CD4-positive, alpha-beta T cell (primary cell): ENCODE measurements at regions of chr12 and their contacts with region 1.

Region 1: DNA sequence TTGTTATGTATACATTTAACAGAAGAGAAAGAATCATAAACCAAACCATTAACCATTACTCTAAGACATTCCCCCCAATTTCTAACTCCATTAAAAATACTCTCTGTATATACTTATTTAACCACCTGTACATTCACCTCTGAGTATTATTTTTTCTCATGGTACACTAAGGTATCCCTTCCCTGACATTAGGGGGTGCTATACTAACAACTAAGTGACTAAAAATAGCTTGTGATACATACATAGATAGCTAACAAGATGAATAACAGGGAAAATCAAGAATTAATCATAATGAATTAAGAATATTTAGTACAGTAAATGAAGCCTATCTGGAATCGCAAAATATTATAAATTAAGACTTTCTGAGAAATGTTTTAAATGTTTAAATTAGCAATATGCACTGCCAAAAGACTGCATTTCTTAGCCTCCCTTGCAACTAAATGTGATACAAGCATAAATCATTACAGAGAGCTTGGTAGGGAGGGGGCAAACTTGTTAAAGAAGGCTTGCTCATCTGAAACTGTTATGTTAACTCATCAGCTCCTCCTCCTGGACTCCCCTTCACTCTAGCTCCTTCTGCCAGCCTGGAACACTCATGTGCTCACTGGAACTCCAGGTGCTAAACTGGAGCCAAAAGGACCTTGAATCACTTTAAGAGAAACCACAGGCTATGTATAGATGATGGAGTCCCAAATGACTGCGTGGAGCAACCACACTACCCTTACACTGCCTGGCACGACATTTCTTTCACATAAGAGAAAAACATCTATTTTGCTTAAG is 14.9 kb downstream of the C2CD5 start:
- DNase-seq: peak in 3 of 14 experiments; percentile 62 to 63 (median 62)
- ATAC-seq: peak; percentile 94
- H3K4me3 ChIP-seq: no peak overlapping the region
- H3K4me3 Mint-ChIP-seq: no peak overlapping the region
- H3K27ac ChIP-seq: no peak overlapping the region
- H3K27ac Mint-ChIP-seq: no peak overlapping the region
- H3K4me1 ChIP-seq: no peaks in the 10 kb centered on the region
- H3K4me1 Mint-ChIP-seq: peaks cover 16% of the 10 kb centered on the region
- H3K27me3 ChIP-seq: no peaks in the 10 kb centered on the region
- H3K27me3 Mint-ChIP-seq: no peaks in the 10 kb centered on the region
- CTCF ChIP-seq: peak; percentile 83

Region 2: GRCh38 chr12:22544038-22544979 is 14.8 kb after region 1 on chr12 and contains the start of gene C2CD5:
- CTCF ChIA-PET with region 1: interaction called, 12 read pairs
- POLR2A ChIA-PET with region 1: interaction called, 12 read pairs
- intact Hi-C with region 1: no loop called
- DNase-seq: peak; percentile 90 to 98 (median 94)
- ATAC-seq: peak; percentile 89
- H3K4me3 ChIP-seq: peak within 1 kb of the TSS; percentile 82
- H3K4me3 Mint-ChIP-seq: peak within 1 kb of the TSS; percentile 95
- H3K27ac ChIP-seq: peak within 1 kb of the TSS; percentile 81 to 88
- H3K27ac Mint-ChIP-seq: peak within 1 kb of the TSS; percentile 97
- H3K4me1 ChIP-seq: peaks cover 31% of the 10 kb centered on the region
- H3K4me1 Mint-ChIP-seq: peaks cover 44% of the 10 kb centered on the region
- H3K27me3 ChIP-seq: no peaks in the 10 kb centered on the region
- H3K27me3 Mint-ChIP-seq: peaks cover 6% of the 10 kb centered on the region
- CTCF ChIP-seq: peak; percentile 37
- total RNA-seq, gene C2CD5: 21.8 to 23.2 TPM

Region 3: DNA sequence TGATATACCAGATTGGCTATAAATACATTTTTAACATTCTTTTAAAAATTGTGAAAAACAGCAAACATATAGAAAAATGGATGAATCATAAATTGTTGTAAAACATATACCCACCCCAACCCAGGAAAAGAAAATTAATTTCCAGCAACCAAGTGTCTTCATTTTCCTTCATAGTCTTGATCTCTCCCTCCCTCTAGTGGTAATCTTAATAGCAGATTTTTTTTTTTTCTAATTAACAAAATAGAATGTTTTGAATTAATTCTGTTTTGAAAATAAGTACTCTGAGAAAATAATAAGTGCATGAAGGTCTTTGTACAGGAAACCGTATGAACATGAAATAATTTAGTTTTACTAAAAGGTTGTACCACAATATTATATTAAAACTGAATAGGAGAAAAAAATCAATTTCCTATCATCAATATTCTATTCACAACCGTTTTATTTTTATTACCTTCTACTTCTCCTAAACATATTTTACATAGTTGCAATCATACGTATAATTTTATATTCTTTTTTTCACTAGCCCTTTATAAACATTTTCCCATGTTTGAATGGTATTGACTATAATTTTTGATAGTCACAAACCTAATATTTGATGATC is 102.5 kb after region 1 on chr12:
- CTCF ChIA-PET with region 1: interaction called, 3 read pairs
- POLR2A ChIA-PET with region 1: no interaction called
- intact Hi-C with region 1: loop called in 1 of 2 experiments (anchors 1 kb)
- DNase-seq: peak in 3 of 14 experiments; percentile 43 to 54 (median 49)
- ATAC-seq: peak; percentile 61
- H3K4me3 ChIP-seq: no peak overlapping the region
- H3K4me3 Mint-ChIP-seq: no peak overlapping the region
- H3K27ac ChIP-seq: no peak overlapping the region
- H3K27ac Mint-ChIP-seq: no peak overlapping the region
- H3K4me1 ChIP-seq: peaks cover 11% of the 10 kb centered on the region
- H3K4me1 Mint-ChIP-seq: peaks cover 81% of the 10 kb centered on the region
- H3K27me3 ChIP-seq: no peaks in the 10 kb centered on the region
- H3K27me3 Mint-ChIP-seq: no peaks in the 10 kb centered on the region
- CTCF ChIP-seq: peak; percentile 82